ENCODE measurements at regions of chr20 and their contacts with region 1.

Region 1: DNA sequence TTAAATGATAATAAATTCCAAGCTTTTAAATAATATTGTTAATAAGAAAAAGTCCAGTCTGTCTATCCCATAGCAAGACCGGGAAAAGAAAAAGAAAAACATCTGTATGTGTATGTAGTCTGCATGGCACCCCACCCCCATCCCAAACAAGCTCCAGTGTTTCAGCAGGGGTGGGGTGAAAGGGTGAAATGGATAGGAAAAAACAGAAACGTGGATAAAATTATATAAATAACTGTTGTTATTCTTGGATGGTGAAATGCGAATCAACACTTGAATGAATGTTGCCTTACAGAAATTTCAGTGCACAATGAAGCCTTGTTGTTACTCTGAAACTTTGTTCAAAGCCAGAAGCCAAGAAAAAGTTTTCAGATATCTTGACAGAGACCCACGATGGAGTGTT is 31.4 kb downstream of the HAO1 start:
- DNase-seq: no peak
- ATAC-seq: no peak
- H3K4me3 ChIP-seq: no peak overlapping the region
- H3K27ac ChIP-seq: no peak overlapping the region
- H3K4me1 ChIP-seq: no peaks in the 10 kb centered on the region
- H3K27me3 ChIP-seq: no peaks in the 10 kb centered on the region
- CTCF ChIP-seq: no peak
- EP300 ChIP-seq: no peak
- POLR2A ChIP-seq: no peak
- RAD21 ChIP-seq: no peak

Region 2: GRCh38 chr20:7714549-7714948 is 194.4 kb before region 1 on chr20:
- CTCF ChIA-PET with region 1: no interaction called
- POLR2A ChIA-PET with region 1: no interaction called
- in situ Hi-C with region 1: no loop called
- intact Hi-C with region 1: loop called (anchors 10 kb)
- DNase-seq: peak; percentile 72
- ATAC-seq: peak; percentile 100
- H3K4me3 ChIP-seq: peak overlapping the region in 2 of 3 experiments; percentile 1 to 4; a peak in 1 of 6 replicates
- H3K27ac ChIP-seq: no peak overlapping the region
- H3K4me1 ChIP-seq: peaks cover 18% of the 10 kb centered on the region
- H3K27me3 ChIP-seq: no peaks in the 10 kb centered on the region
- CTCF ChIP-seq: peak; percentile 34; the same call in 1 of the 2 replicates
- EP300 ChIP-seq: 0 out of 4 replicates have a peak, but pooled peaks of 1 of the 2 experiments have one; percentile 15
- POLR2A ChIP-seq: no peak
- RAD21 ChIP-seq: no peak